ENCODE measurements at regions of chr11 and their contacts with region 1.

Region 1: GRCh38 chr11:122673701-122674100 is 18.2 kb downstream of the UBASH3B start:
- DNase-seq: no peak
- H3K4me3 Mint-ChIP-seq: no peak overlapping the region
- H3K27ac Mint-ChIP-seq: no peak overlapping the region
- H3K4me1 Mint-ChIP-seq: peaks cover 31% of the 10 kb centered on the region
- H3K27me3 Mint-ChIP-seq: peaks cover 8% of the 10 kb centered on the region

Region 2: GRCh38 chr11:122649116-122649515 is 24.6 kb before region 1 on chr11:
- CTCF ChIA-PET with region 1: no interaction called
- POLR2A ChIA-PET with region 1: no interaction called
- DNase-seq: no peak
- H3K4me3 Mint-ChIP-seq: no peak overlapping the region
- H3K27ac Mint-ChIP-seq: no peak overlapping the region
- H3K4me1 Mint-ChIP-seq: peaks cover 3% of the 10 kb centered on the region
- H3K27me3 Mint-ChIP-seq: peaks cover 21% of the 10 kb centered on the region

Region 3: DNA sequence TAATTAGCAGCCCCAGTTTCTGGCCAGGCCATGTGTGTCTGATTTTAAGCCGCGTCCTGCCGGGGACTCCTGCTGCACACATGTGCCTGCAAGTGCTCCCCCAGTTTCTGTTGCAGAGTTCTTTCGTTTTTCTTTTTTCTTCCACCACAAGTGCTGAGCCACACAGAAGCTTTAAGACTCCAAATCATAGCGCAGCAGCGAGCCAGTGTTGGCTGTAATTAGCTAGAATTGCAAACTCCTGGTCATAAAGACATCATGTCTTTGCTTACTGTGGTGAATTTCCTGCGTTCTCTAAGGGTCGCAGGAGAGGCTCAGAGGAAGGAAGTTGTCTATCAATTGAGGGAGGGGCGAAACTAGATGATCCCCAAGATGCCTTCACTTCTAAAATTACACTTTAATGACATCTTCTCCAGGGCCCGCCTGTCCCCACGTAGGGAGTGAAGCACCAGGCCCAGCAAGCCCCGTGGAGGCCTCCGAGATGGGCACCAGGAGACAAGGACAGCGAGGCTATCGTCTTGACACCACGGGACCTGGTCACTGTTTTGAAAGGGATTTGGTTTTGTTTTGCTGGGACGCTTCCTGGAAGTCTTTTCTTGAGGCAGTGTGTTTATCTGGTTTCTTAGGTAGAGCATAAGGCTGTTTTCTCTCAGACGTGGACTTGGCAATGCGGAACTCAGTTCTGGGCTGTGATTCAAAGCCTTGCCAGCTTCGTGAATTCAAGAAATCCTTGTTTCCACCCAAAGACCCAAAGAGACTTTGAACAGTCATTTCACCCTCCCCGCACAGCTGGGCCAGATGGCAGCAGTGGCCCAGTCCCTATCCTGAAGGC is 53.6 kb after region 1 on chr11:
- CTCF ChIA-PET with region 1: interaction called, 3 read pairs
- POLR2A ChIA-PET with region 1: interaction called, 10 read pairs
- DNase-seq: peak; percentile 59
- H3K4me3 Mint-ChIP-seq: peak overlapping the region; percentile 60
- H3K27ac Mint-ChIP-seq: peak overlapping the region; percentile 90
- H3K4me1 Mint-ChIP-seq: peaks cover 68% of the 10 kb centered on the region
- H3K27me3 Mint-ChIP-seq: no peaks in the 10 kb centered on the region

Measured in activated CD4-positive, alpha-beta memory T cell treated with anti-CD3 and anti-CD28 coated beads, Interleukin-2, amount 10 ng/mL, durations not matched to agents 7 days and 5 days (primary cell).